Posterior cingulate gyrus (tissue), 11 donors: ENCODE measurements at regions of chr12 and their contacts with region 1.

Region 1: GRCh38 chr12:64392221-64392620 is 1.7 kb upstream of the C12orf56 start:
- DNase-seq: no peak

Region 2: DNA sequence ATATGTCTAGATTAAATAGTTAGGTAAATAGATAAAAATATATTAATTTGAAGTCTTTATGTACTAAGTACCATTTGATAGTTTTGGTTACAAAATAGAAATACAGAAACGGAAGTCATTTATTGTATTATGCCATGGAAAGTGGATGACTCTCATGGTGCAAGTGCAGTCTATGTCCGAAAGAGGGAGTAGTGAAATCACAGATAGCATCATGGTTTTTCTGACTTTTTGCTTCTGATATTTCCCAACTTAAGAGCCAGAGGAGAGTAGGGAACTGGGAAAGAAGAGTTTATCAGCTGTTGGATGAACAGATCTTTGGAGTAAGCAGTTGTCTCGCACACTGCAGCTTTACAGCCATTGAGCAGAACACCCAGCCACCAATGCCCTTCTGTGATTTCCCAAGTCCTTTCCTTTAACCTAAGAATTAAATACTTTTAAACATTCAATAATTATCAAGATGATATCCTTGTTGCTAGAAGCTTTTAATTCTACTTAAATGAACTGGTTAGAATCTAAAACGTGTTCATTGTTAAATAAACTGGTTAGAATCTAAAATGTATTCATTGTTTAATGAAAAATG is 566.1 kb before region 1 on chr12:
- intact Hi-C with region 1: loop called (anchors 5 kb)
- DNase-seq: no peak

Region 3: GRCh38 chr12:64273527-64274403 is 118.5 kb before region 1 on chr12:
- intact Hi-C with region 1: loop called (anchors 10 kb)
- DNase-seq: peak in 2 of 10 donors; percentile 20 to 35